ENCODE measurements at regions of chr19 and their contacts with region 1.

Region 1: DNA sequence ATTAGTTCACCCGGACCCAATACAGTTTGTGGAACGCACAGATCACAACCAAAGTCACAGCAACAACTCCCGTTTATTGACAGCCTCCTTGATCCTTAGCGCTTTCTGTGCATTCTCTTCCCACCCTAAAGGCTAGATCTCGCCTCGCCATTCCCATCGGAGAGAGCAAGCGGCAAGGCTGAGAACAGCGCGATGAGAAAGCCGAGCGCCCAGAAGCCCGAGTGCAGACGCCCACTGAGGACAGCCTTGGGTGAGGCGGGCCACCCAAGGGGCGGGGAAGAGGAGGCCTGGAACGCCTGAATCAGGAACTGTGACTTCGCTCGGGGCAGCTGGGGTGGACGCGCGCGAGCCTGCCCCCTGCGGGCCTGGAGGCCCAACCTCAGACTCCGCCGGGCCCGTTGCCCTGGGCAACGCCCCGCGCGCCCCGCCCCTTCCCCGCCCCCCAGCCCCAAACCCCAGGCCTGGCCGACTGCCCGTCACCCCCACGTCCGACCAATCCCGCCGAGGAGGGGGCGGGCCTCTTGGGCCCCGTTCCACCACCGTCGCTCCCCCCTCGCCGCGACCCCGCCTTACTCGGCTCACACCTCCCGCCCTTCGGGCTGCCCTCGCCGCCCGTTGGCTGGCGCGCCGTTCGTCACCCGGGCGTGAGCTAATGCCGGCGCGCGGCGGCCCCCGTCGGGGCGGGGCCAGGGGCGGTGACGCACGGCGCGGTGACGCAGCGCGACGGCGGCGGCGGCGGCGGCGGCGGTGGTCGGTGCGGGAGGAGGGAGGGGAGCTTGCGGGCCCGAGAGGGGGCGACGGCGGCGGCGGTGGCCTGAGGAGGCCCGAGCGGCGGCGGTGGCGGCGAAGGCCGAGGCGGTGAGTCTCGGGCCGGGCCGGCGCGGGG is at the start of gene SAMD4B:
- DNase-seq: peak; percentile 99 to 100
- ATAC-seq: peak; percentile 90 to 97
- H3K4me3 ChIP-seq: peak within 1 kb of the TSS; percentile 90
- H3K27ac ChIP-seq: peak within 1 kb of the TSS; percentile 85 to 94
- H3K4me1 ChIP-seq: peaks cover 22% of the 10 kb centered on the region
- CTCF ChIP-seq: peak; percentile 96
- EP300 ChIP-seq: peak in 1 of 2 experiments; percentile 9; a peak in 1 of 5 replicates
- POLR2A ChIP-seq: peak; percentile 97
- RAD21 ChIP-seq: peak; percentile 31 to 60; a peak in 4 of 5 replicates
- polyA plus RNA-seq, gene SAMD4B: 82.1 and 101 TPM in 2 replicates

Region 2: GRCh38 chr19:39363901-39364457 is 22.0 kb after region 1 on chr19:
- CTCF ChIA-PET with region 1: interaction called, 12 read pairs
- POLR2A ChIA-PET with region 1: interaction called, 8 read pairs
- DNase-seq: no peak
- ATAC-seq: no peak; a peak in 2 of 6 replicates
- H3K4me3 ChIP-seq: no peak overlapping the region
- H3K27ac ChIP-seq: no peak overlapping the region
- H3K4me1 ChIP-seq: no peaks in the 10 kb centered on the region
- CTCF ChIP-seq: no peak
- EP300 ChIP-seq: no peak
- POLR2A ChIP-seq: no peak
- RAD21 ChIP-seq: no peak

Region 3: DNA sequence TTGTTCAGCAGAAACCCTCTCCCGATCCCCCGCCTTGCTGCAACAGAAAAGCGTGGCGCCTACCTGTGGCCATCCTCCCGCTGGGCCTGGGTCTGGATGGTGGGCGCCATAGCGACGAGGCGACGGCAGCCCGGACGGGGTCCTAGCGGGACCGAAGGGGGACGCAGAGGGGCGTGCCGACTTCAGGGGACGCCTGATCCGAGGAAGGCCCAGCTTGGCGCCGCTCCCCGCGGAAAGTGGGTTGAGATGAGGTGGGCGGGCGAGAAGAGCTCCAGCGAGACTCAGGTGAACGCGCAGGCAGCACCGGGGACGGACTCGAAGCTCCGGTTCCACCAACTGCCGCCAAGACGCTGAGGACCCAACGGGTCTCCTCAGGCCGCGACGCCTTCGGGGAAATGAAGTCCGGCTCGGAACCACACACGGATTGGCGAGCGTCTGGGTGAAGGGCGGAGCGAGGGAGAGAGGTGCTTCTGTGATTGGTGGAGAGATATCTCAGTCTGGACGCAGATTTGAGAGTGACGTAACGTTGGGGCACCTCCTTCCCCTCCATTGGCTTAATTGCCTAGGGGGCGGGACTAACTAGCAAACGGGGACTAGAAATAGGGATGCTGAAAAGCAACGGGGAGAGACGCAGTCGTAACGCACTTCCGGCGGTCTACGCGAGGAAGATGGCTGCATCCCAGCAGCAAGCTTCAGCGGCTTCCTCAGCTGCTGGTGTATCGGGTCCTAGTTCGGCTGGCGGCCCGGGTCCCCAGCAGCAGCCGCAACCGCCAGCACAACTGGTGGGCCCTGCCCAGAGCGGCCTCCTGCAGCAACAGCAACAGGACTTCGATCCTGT is 49.0 kb after region 1 on chr19 and contains the starts of genes MED29 and PAF1:
- CTCF ChIA-PET with region 1: interaction called, 5 read pairs
- POLR2A ChIA-PET with region 1: interaction called, 16 read pairs
- DNase-seq: peak; percentile 100
- ATAC-seq: peak; percentile 91 to 97
- H3K4me3 ChIP-seq: peak within 1 kb of the TSS; percentile 68
- H3K27ac ChIP-seq: peak within 1 kb of the TSS; percentile 89 to 90
- H3K4me1 ChIP-seq: peaks cover 15% of the 10 kb centered on the region; the same call in 2 of the 3 replicates
- CTCF ChIP-seq: no peak
- EP300 ChIP-seq: no peak
- POLR2A ChIP-seq: peak; percentile 99
- RAD21 ChIP-seq: no peak; a peak in 1 of 5 replicates
- polyA plus RNA-seq, gene MED29: 55.7 and 57.5 TPM in 2 replicates
- polyA plus RNA-seq, gene PAF1: 73.0 and 103 TPM in 2 replicates

Region 4: DNA sequence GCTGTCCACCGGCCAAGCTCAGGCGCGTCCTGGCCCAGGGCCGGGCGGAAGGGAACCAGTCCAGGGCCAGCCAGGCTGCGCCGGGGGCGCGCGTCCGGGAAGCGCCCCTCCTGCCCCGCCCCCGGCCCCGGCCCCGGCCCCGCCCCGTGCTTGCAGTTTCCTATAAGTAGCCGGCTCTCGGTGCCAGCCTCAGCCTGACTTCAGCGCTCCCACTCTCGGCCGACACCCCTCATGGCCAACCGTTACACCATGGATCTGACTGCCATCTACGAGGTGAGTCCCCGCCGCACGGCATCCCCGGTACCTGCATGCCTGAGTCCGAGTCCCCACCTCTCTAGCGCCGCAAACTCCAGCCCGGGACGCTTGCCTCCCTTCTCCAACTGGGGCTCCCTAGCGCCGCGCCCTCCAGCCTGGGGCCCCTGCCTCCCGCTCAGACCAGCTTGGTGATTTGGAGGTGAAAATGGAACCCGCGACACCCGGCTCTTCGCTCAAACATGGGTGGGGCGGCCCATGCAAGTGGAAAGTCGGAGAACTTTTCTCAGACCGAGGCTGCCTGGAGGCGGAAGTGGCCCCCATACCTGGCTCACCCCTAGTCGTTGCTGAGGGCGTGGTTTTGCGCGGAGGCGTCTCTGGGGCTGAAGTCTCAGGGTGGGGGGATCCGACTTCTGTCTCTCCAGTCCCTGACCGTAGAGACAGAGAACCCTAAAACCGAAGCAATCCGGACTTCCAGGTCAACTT is 64.9 kb after region 1 on chr19 and contains the start of gene ZFP36:
- CTCF ChIA-PET with region 1: interaction called, 20 read pairs
- POLR2A ChIA-PET with region 1: interaction called, 10 read pairs
- DNase-seq: peak; percentile 93 to 95
- ATAC-seq: peak; percentile 15 to 37
- H3K4me3 ChIP-seq: peak within 1 kb of the TSS; percentile 76
- H3K27ac ChIP-seq: peak within 1 kb of the TSS; percentile 94 to 99
- H3K4me1 ChIP-seq: peaks cover 70% of the 10 kb centered on the region
- CTCF ChIP-seq: peak; percentile 22; the same call in 1 of the 3 replicates
- EP300 ChIP-seq: no peak
- POLR2A ChIP-seq: peak; percentile 100
- RAD21 ChIP-seq: 0 out of 5 replicates have a peak, but pooled peaks of 1 of the 2 experiments have one; percentile 39
- polyA plus RNA-seq, gene ZFP36: 29.1 and 35.6 TPM in 2 replicates